ENCODE measurements at regions of chr10 and their contacts with region 1.

Region 1: DNA sequence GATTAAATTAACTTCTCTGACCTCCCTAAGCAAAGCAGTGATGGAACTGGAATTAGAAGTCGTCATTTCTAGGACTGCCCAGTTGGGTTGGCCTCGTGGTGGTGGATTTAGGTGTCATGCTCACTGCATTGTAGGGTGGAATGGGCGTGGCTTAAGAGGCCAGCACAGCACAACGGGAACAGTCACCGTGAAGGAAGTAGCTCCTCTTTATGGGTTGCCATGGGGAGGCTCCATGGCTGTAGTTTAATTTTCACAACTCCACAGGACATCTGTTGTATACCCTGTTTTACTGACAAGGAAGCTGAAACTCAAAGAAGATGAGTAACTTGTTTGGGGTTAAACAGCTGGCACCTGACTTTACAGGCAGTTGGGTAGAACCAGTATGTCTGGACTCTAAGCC is 208.3 kb downstream of the CELF2 start:
- DNase-seq: peak; percentile 71
- ATAC-seq: peak; percentile 77
- H3K4me3 Mint-ChIP-seq: no peak overlapping the region
- H3K27ac Mint-ChIP-seq: peak overlapping the region; percentile 92
- H3K4me1 Mint-ChIP-seq: peaks cover 95% of the 10 kb centered on the region
- H3K27me3 Mint-ChIP-seq: no peaks in the 10 kb centered on the region

Region 2: DNA sequence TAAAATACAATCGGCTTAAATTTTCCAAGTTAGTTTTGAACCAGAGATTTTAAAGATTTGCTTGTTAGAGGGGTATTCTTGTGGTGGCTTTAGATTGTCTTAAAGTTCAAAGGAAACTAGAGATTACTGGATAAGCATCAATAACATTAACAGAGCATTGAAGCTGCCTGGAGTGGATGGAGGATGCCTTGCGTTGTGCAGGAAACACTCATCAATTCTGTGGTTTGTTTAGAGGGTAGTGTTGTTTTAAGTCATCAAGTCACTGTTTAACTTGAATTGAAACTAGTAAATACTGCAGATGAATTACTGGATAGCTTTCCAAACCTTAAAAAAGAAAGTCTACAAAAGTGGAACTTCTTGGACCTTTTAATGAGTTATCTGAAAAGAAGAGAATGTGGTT is 10.3 kb after region 1 on chr10:
- CTCF ChIA-PET with region 1: interaction called, 16 read pairs
- POLR2A ChIA-PET with region 1: interaction called, 19 read pairs
- DNase-seq: peak; percentile 58
- ATAC-seq: peak; percentile 85
- H3K4me3 Mint-ChIP-seq: peak overlapping the region; percentile 26
- H3K27ac Mint-ChIP-seq: peak overlapping the region; percentile 43
- H3K4me1 Mint-ChIP-seq: peaks cover 87% of the 10 kb centered on the region
- H3K27me3 Mint-ChIP-seq: no peaks in the 10 kb centered on the region